Activated B cell treated with CpG ODN at 0.5 μM for 24 hours (primary cell): ENCODE measurements at regions of chr11 and their contacts with region 1.

Region 1: DNA sequence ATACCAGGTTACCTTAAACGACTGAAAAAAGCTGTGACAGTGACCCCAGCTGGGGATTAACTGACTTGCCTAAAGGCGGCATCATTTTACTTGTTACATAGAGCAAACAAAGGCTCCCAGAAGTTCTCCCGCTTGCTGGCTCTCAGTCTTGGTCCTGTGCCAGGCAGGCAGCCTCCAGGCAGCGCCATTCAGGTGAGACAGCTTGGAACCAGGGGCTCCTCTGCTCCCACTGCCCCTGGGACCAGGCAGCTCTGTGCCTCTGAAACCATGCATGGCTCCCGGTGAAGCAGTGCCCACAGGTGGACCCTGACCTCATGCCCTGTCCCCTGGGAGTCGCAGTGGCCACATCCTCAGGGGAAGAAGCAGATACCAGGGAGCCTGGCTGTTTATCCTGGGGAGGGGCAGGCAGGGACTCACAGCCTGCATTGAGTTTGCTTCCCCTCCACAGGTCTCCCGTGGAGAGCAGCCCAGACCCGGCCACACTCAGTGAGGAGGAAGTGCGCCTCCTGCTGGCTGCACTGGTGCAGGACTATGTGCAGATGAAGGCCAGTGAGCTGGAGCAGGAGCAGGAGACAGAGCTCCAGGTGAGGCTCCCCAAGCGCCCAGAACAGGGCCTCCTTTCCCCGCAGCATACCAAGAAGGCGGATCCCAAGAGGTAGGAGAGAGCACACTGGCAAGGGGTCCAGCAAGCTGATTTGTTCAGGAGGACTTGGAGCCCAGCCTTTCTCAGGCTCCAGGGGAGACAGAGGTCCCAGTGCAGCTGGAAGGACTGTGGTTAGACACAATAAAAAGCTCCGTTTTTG is 15.6 kb upstream of the CYP2R1 start:
- DNase-seq: peak; percentile 73
- ATAC-seq: peak; percentile 47
- H3K4me3 Mint-ChIP-seq: no peak overlapping the region
- H3K27ac Mint-ChIP-seq: no peak overlapping the region
- H3K4me1 Mint-ChIP-seq: peaks cover 45% of the 10 kb centered on the region
- H3K27me3 Mint-ChIP-seq: peaks cover 2% of the 10 kb centered on the region
- CTCF ChIP-seq: no peak

Region 2: DNA sequence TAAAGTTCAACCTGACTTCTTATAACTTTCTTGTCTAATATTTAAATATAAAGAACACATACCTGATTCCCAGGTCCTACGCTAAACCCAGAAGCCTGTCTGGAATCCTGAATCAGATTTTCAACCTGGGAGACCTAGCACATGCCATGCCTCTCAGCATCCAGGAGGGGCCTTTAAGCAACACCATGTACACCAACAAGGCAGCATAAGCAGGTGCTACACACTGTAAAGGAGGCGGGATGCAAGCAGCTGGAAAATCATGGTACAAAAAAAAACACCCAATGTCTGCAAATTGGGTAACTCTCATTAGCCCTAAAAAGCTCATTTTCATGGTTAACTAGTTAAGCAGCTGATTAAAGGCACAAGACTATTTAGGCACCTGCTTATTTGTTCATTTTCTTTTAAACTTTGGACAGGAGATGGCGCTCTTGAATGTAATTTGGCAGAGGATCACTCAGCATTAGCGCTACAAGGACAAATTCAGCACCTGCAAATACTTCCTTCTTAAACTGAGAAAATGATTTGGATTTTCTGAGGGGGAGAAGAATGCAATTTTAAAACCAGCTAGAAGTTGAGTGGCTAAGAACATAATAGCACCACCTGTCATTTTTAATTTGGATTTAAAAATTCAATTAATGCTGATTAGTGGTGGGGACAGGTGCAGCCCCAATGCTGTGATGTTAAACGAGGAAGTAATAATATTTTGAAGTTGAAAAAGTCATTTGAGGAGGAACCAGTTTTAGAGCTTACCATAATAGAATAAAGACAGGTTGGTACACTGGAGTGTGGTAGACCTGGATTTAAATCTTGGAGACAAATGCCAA is 1135.2 kb before region 1 on chr11:
- CTCF ChIA-PET with region 1: no interaction called
- POLR2A ChIA-PET with region 1: no interaction called
- intact Hi-C with region 1: loop called (anchors 5 kb)
- DNase-seq: no peak
- ATAC-seq: peak; percentile 57
- H3K4me3 Mint-ChIP-seq: no peak overlapping the region
- H3K27ac Mint-ChIP-seq: no peak overlapping the region
- H3K4me1 Mint-ChIP-seq: peaks cover 6% of the 10 kb centered on the region
- H3K27me3 Mint-ChIP-seq: peaks cover 15% of the 10 kb centered on the region
- CTCF ChIP-seq: no peak

Region 3: DNA sequence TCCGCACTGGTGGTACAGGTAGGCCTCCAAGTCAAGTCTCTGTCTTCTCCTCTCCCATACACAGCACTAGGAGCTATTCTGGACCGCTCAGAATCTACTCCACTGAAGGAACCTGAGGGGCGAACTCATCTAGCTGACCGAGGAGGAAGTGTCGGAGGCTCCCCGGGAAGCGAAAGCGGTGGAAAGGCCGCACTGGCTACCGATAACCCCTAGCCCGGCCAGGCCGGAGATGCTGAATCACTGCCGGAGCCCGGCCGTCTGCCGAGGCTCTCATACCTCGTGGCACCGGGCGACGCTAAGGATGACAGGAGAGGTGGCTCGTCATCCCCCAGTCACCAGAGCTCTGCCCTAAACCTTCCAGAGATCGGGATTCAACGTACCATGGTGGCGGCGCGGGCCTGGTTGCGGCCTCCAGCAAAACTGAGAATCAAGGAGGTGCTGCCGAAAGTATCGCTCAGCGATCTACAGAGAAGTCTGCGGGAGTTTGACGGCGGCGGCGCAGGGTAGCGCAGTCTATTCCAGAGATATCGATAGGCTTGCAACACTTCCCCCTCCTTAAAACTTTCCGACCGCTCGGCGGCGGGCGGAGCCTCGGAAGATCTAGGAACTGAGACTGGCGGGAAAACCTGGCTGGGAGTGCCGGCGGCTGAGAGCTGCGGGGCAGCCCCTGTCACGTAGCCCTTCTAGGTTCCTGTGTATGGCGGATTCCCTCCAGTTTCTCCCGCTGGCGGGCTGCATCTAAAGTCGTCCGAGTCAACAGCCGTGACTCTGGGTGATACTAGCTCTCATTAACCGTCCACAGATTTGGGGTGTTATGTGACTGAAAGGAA is 387.5 kb before region 1 on chr11 and contains the start of gene PSMA1:
- CTCF ChIA-PET with region 1: interaction called, 14 read pairs
- POLR2A ChIA-PET with region 1: interaction called, 16 read pairs
- intact Hi-C with region 1: loop called (anchors 1 kb)
- DNase-seq: peak; percentile 82
- ATAC-seq: peak; percentile 91
- H3K4me3 Mint-ChIP-seq: peak within 1 kb of the TSS; percentile 96
- H3K27ac Mint-ChIP-seq: peak within 1 kb of the TSS; percentile 95
- H3K4me1 Mint-ChIP-seq: peaks cover 27% of the 10 kb centered on the region
- H3K27me3 Mint-ChIP-seq: no peaks in the 10 kb centered on the region
- CTCF ChIP-seq: no peak
- total RNA-seq, gene PSMA1: 184 and 198 TPM in 2 replicates

Region 4: DNA sequence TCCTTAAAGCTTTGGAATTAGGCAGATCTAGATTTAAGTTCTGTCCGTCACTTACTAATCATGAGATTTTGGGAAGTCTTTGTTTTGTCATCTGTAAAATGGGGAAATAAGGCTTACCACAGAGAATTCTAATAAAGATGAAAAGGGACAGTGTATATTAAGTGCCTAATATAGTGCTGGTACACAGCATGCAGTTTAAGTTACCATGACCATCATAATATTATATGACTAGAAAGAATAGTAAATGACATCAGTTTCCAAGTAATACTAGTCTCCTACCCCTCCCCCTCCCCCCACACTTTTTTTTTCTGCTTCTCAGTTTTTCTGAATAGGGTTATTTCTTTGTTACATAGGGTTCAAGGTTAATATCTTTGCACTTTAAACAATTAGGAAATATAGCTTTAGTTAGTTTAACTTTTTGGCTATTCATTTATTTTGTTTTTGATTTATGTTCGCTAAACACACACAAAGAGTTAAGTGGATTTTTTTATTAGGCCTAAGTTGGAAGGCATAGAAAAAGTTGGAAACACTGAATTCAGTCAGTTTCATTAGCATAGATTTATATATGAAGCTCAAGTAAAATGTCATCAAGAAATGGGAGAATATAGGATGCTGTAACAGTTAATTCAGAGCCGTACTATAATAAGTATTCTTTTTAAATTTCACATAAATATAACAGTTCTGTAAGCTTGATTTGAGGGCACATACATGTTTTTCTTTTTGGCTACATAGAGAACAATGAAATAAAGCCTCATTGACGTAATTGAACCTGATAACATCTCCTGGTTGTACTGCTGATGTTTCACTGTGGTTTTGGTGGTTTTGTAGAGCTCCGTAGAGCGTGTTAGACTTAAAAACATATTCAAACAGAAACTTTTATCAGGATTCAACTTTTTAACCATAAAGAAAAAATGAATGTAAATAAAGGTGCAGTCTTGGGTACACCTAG is 142.8 kb before region 1 on chr11:
- CTCF ChIA-PET with region 1: interaction called, 15 read pairs
- POLR2A ChIA-PET with region 1: interaction called, 21 read pairs
- intact Hi-C with region 1: loop called (anchors 1 kb)
- DNase-seq: no peak
- ATAC-seq: peak; percentile 87
- H3K4me3 Mint-ChIP-seq: peak overlapping the region; percentile 38
- H3K27ac Mint-ChIP-seq: peak overlapping the region; percentile 74
- H3K4me1 Mint-ChIP-seq: peaks cover 34% of the 10 kb centered on the region
- H3K27me3 Mint-ChIP-seq: no peaks in the 10 kb centered on the region
- CTCF ChIP-seq: no peak

Region 5: GRCh38 chr11:15006139-15006759 is 98.6 kb after region 1 on chr11:
- CTCF ChIA-PET with region 1: interaction called, 104 read pairs
- POLR2A ChIA-PET with region 1: interaction called, 6 read pairs
- intact Hi-C with region 1: loop called (anchors 1 kb)
- DNase-seq: no peak
- ATAC-seq: peak; percentile 42
- H3K4me3 Mint-ChIP-seq: no peak overlapping the region
- H3K27ac Mint-ChIP-seq: no peak overlapping the region
- H3K4me1 Mint-ChIP-seq: no peaks in the 10 kb centered on the region
- H3K27me3 Mint-ChIP-seq: peaks cover 32% of the 10 kb centered on the region
- CTCF ChIP-seq: no peak

Region 6: GRCh38 chr11:15208378-15209222 is 301.0 kb after region 1 on chr11:
- CTCF ChIA-PET with region 1: interaction called, 43 read pairs
- POLR2A ChIA-PET with region 1: no interaction called
- intact Hi-C with region 1: loop called (anchors 1 kb)
- DNase-seq: peak; percentile 66
- ATAC-seq: peak; percentile 97
- H3K4me3 Mint-ChIP-seq: no peak overlapping the region
- H3K27ac Mint-ChIP-seq: no peak overlapping the region
- H3K4me1 Mint-ChIP-seq: no peaks in the 10 kb centered on the region
- H3K27me3 Mint-ChIP-seq: peaks cover 12% of the 10 kb centered on the region
- CTCF ChIP-seq: peak; percentile 67